Left lung (tissue), 14 donors: ENCODE measurements at regions of chr6 and their contacts with region 1.

Region 1: GRCh38 chr6:133916650-133917151 is 27.8 kb downstream of the TCF21 start:
- DNase-seq: peak in 3 of 4 donors; percentile 74 to 93 (median 79)
- ATAC-seq: peak; percentile 90
- H3K4me3 ChIP-seq: no peak overlapping the region
- H3K27ac ChIP-seq: no peak overlapping the region
- H3K4me1 ChIP-seq: no peaks in the 10 kb centered on the region
- H3K27me3 ChIP-seq: peaks cover 0 to 6% of the 10 kb centered on the region in 2 donors
- CTCF ChIP-seq: peak; percentile 76 to 87

Region 2: DNA sequence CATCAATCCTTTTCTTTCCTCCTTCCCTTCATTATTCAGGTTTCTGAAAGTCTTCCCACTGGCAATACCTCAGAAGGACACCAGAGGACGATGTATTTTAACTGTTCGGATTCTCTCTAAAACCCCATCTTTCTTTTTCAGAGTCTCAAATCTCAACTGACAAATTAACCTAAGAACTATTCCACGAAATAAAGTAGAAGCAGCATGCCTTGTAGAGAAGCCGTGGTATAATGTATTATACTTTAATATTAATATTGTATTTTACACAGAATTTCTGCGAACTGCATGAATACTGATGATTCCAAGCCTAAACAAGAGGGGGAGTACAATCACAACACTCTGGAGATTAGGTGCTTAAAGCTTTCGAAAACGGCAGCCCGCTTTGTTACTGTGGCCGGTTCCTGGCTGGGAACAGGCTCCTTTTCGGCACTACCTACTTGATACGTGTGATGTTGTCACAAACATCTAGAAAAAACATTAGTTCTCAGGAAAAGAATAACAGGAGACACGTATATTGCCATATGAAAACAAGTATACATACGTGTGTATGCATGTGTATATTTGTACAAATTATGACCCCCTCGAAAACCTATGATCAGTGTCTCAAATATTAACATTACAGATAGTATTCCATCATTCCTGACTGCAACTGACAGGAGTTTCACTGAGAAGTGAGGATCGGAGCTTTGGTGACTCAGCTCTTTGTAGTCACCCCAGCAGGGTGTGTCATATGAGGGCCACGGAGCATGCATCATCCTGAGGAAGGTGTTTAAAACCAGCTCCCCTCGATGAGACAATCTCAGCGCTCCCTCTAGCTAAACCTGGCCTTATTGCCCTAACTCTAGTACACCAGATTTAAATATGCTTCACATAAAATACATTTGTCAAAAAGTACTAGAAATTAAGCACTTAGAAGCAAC is 347.5 kb before region 1 on chr6:
- intact Hi-C with region 1: loop called in 1 of 2 experiments (anchors 5 kb)
- DNase-seq: peak in 2 of 4 donors; percentile 60 to 75
- ATAC-seq: peak; percentile 91
- H3K4me3 ChIP-seq: no peak overlapping the region
- H3K27ac ChIP-seq: peak overlapping the region in 1 of 2 donors; percentile 33
- H3K4me1 ChIP-seq: no peaks in the 10 kb centered on the region
- H3K27me3 ChIP-seq: peaks cover 0 to 33% of the 10 kb centered on the region in 2 donors
- CTCF ChIP-seq: peak; percentile 62 to 90